PC-9 (cell line): ENCODE measurements at regions of chr5 and their contacts with region 1.

Region 1: GRCh38 chr5:79020861-79021561 is 35.9 kb upstream of the ARSB start:
- DNase-seq: peak in 1 of 2 experiments; percentile 38
- H3K4me3 ChIP-seq: no peak overlapping the region
- H3K27ac ChIP-seq: no peak overlapping the region
- H3K4me1 ChIP-seq: no peaks in the 10 kb centered on the region
- H3K27me3 ChIP-seq: no peaks in the 10 kb centered on the region
- CTCF ChIP-seq: peak; percentile 74

Region 2: GRCh38 chr5:78447775-78448424 is 573.1 kb before region 1 on chr5:
- CTCF ChIA-PET with region 1: interaction called, 11 read pairs
- POLR2A ChIA-PET with region 1: no interaction called
- intact Hi-C with region 1: no loop called
- DNase-seq: no peak
- H3K4me3 ChIP-seq: no peak overlapping the region
- H3K27ac ChIP-seq: no peak overlapping the region
- H3K4me1 ChIP-seq: no peaks in the 10 kb centered on the region
- H3K27me3 ChIP-seq: no peaks in the 10 kb centered on the region
- CTCF ChIP-seq: no peak

Region 3: GRCh38 chr5:78927657-78928282 is 93.2 kb before region 1 on chr5:
- CTCF ChIA-PET with region 1: no interaction called
- POLR2A ChIA-PET with region 1: no interaction called
- intact Hi-C with region 1: no loop called
- DNase-seq: peak; percentile 16 to 82
- H3K4me3 ChIP-seq: no peak overlapping the region
- H3K27ac ChIP-seq: no peak overlapping the region
- H3K4me1 ChIP-seq: peaks cover 10% of the 10 kb centered on the region
- H3K27me3 ChIP-seq: no peaks in the 10 kb centered on the region
- CTCF ChIP-seq: no peak

Region 4: DNA sequence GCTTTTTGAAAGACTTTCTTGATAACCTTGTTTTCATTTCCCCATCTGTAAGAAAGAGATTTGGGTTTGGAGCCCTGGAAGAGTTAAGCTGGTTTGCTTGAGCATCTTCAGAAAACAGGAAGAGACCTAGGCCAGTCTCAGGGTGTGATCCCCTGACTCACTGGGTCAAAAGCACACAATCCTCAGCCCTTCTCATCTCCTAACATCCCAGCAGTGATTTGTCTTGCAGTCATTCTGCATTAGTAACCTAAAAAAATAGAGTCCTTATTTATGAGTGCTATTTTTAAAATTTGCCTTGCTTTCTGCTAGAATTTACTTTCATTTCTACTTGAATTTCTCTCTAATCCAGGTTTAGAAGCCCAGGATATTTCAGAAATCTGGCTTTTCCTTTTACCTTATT is 19.5 kb before region 1 on chr5:
- CTCF ChIA-PET with region 1: no interaction called
- POLR2A ChIA-PET with region 1: no interaction called
- intact Hi-C with region 1: no loop called
- DNase-seq: no peak
- H3K4me3 ChIP-seq: no peak overlapping the region
- H3K27ac ChIP-seq: no peak overlapping the region
- H3K4me1 ChIP-seq: no peaks in the 10 kb centered on the region
- H3K27me3 ChIP-seq: no peaks in the 10 kb centered on the region
- CTCF ChIP-seq: no peak

Region 5: DNA sequence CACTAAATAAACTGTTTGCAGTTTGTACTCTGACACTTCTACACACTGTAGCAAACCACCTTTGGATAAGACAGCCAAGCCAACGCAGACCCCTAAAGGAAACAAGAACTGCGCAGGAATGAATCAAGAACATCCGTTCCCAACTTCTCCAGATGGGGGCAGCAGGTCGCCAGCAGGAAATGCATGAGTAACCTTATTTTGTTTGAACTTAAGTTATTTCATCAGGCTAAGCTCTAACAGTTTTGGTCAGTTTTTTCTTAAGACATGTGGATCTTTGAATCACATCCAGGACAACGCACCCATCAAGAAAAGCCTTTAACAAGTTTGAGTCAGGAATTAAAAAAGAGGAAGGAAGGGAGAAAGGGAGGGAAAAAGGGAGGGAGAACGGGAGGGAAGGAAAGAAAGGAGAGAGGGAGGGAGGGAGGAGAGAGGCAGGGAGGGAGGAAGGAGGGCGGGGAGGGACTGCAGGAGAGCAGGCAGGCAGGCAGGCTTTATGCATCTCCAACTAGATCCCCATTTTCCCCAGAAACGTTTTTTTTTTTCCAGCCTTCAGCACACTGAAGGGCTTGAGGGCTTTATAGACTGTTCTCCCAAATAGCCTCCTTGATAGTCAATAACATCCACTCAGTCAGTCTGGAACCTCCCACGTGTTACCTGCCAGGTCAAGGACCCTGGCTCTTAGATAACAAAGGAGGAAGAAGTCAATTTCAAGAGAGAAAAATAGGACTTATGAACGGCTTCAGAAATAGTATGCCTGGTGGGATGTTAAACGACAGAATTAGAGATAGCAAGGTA is 112.8 kb after region 1 on chr5:
- CTCF ChIA-PET with region 1: interaction called, 97 read pairs
- POLR2A ChIA-PET with region 1: interaction called, 10 read pairs
- intact Hi-C with region 1: loop called (anchors 1 kb)
- DNase-seq: peak; percentile 61 to 66
- H3K4me3 ChIP-seq: peak overlapping the region; percentile 30; the same call in 1 of the 2 replicates
- H3K27ac ChIP-seq: peak overlapping the region; percentile 82
- H3K4me1 ChIP-seq: peaks cover 15% of the 10 kb centered on the region
- H3K27me3 ChIP-seq: no peaks in the 10 kb centered on the region
- CTCF ChIP-seq: peak; percentile 78

Region 6: GRCh38 chr5:79241535-79241979 is 220.5 kb after region 1 on chr5:
- CTCF ChIA-PET with region 1: no interaction called
- POLR2A ChIA-PET with region 1: no interaction called
- intact Hi-C with region 1: loop called (anchors 10 kb)
- DNase-seq: no peak
- H3K4me3 ChIP-seq: peak overlapping the region; percentile 23; the same call in 1 of the 2 replicates
- H3K27ac ChIP-seq: no peak overlapping the region
- H3K4me1 ChIP-seq: peaks cover 17% of the 10 kb centered on the region
- H3K27me3 ChIP-seq: no peaks in the 10 kb centered on the region
- CTCF ChIP-seq: no peak

Region 7: GRCh38 chr5:79464695-79465332 is 443.8 kb after region 1 on chr5:
- CTCF ChIA-PET with region 1: interaction called, 5 read pairs
- POLR2A ChIA-PET with region 1: no interaction called
- intact Hi-C with region 1: loop called (anchors 1 kb)
- DNase-seq: no peak
- H3K4me3 ChIP-seq: no peak overlapping the region
- H3K27ac ChIP-seq: no peak overlapping the region
- H3K4me1 ChIP-seq: no peaks in the 10 kb centered on the region
- H3K27me3 ChIP-seq: no peaks in the 10 kb centered on the region
- CTCF ChIP-seq: peak; percentile 78

Region 8: GRCh38 chr5:79857714-79858409 is 836.9 kb after region 1 on chr5:
- CTCF ChIA-PET with region 1: no interaction called
- POLR2A ChIA-PET with region 1: no interaction called
- intact Hi-C with region 1: loop called (anchors 2 kb)
- DNase-seq: peak in 1 of 2 experiments; percentile 65
- H3K4me3 ChIP-seq: no peak overlapping the region
- H3K27ac ChIP-seq: no peak overlapping the region
- H3K4me1 ChIP-seq: no peaks in the 10 kb centered on the region
- H3K27me3 ChIP-seq: no peaks in the 10 kb centered on the region
- CTCF ChIP-seq: peak; percentile 96

Region 9: GRCh38 chr5:80672140-80672736 is 1651.2 kb after region 1 on chr5:
- CTCF ChIA-PET with region 1: no interaction called
- POLR2A ChIA-PET with region 1: no interaction called
- intact Hi-C with region 1: loop called (anchors 10 kb)
- DNase-seq: peak; percentile 57 to 58
- H3K4me3 ChIP-seq: no peak overlapping the region
- H3K27ac ChIP-seq: no peak overlapping the region
- H3K4me1 ChIP-seq: no peaks in the 10 kb centered on the region
- H3K27me3 ChIP-seq: no peaks in the 10 kb centered on the region
- CTCF ChIP-seq: peak; percentile 91